PC-9 (cell line): ENCODE measurements at regions of chr20 and their contacts with region 1.

Region 1: GRCh38 chr20:20549718-20550117 is 162.7 kb downstream of the RALGAPA2 start:
- DNase-seq: peak; percentile 29 to 96
- H3K4me3 ChIP-seq: no peak overlapping the region
- H3K27ac ChIP-seq: peak overlapping the region; percentile 97
- H3K4me1 ChIP-seq: peaks cover 74% of the 10 kb centered on the region
- H3K27me3 ChIP-seq: no peaks in the 10 kb centered on the region
- CTCF ChIP-seq: no peak

Region 2: GRCh38 chr20:20375862-20376261 is 173.9 kb before region 1 on chr20:
- CTCF ChIA-PET with region 1: no interaction called
- POLR2A ChIA-PET with region 1: interaction called, 20 read pairs
- intact Hi-C with region 1: no loop called
- DNase-seq: no peak
- H3K4me3 ChIP-seq: no peak overlapping the region
- H3K27ac ChIP-seq: no peak overlapping the region
- H3K4me1 ChIP-seq: no peaks in the 10 kb centered on the region
- H3K27me3 ChIP-seq: peaks cover 22% of the 10 kb centered on the region
- CTCF ChIP-seq: no peak

Region 3: DNA sequence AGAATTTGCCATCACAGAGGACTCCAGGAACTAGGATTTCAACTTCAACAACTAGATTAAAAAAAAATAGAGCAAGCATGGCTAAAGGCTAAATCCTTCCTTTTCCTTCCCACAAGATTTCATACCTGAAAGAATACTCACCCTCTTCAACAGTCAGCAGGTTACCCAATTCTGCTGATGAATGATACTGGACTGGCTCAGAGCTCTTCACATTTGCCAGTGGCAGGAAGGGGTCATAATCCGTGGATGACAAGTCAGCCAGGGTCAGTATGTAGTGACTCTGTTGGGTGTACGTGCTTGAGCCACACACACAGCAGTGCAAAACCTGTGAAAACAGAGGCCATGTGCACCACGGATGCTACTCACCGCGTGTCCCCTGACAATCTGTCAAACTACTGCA is 28.9 kb before region 1 on chr20:
- CTCF ChIA-PET with region 1: no interaction called
- POLR2A ChIA-PET with region 1: no interaction called
- intact Hi-C with region 1: loop called (anchors 1 kb)
- DNase-seq: peak; percentile 47 to 96
- H3K4me3 ChIP-seq: no peak overlapping the region
- H3K27ac ChIP-seq: peak overlapping the region; percentile 94
- H3K4me1 ChIP-seq: peaks cover 39% of the 10 kb centered on the region
- H3K27me3 ChIP-seq: no peaks in the 10 kb centered on the region
- CTCF ChIP-seq: no peak